Breast epithelium (tissue), 4 donors: ENCODE measurements at regions of chr9 and their contacts with region 1.

Region 1: DNA sequence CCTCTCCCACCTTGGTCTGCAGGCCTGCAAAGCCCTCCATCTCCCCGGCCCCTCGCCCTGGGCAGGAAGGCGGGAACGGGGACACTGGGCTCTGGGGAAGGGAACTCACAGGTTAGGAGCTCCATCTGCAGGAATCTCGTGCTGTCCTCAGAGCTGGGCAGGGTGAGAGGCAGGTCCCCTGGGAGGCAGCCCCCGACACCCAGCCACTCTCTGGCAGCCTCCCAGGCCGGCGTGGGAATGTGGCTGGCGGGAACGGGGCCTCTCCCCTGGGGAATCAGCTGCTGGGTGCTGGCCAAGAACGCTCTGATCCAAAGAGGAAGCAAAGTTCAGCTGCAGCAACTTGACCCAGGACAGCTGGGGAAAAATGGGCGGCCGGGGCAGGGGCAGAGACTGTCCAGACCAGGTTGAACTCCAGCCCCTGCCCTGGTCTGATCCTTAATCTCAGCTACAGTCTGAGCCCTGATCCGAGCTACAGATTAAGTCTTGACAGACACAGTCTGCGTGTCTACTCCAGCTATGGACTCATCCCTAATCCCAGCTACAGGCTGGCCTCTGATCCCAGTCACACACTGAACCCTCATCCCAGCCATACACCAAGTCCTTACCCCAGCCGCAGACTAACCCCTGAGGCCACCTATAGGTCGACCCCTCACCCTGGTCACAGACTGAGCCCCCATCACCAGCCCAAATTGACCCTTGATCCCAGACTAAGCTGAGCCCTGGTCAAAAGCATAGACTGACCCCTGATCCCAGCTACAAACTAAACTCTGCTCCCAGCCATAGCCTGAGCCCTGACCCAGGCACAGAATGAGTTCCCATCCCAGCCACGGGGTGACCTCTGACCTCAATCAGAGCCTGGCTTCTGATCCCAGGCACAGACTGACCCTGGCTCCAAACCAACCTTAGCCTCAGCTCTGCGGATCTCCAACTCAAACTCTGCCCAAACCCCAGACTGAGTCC is 37.3 kb upstream of the EGFL7 start:
- DNase-seq: peak in 1 of 2 donors; percentile 46
- H3K4me3 ChIP-seq: peak overlapping the region in 1 of 3 donors; percentile 17
- H3K27ac ChIP-seq: peak overlapping the region in 1 of 2 donors; percentile 16
- H3K4me1 ChIP-seq: peaks cover 0 to 7% of the 10 kb centered on the region in 2 donors
- H3K27me3 ChIP-seq: no peaks in the 10 kb centered on the region
- CTCF ChIP-seq: no peak
- POLR2A ChIP-seq: no peak

Region 2: GRCh38 chr9:136609838-136610311 is 15.5 kb before region 1 on chr9:
- intact Hi-C with region 1: loop called (anchors 1 kb)
- DNase-seq: no peak
- H3K4me3 ChIP-seq: no peak overlapping the region
- H3K27ac ChIP-seq: no peak overlapping the region
- H3K4me1 ChIP-seq: no peaks in the 10 kb centered on the region
- H3K27me3 ChIP-seq: peaks cover 0 to 5% of the 10 kb centered on the region in 2 donors
- CTCF ChIP-seq: no peak
- POLR2A ChIP-seq: no peak

Region 3: DNA sequence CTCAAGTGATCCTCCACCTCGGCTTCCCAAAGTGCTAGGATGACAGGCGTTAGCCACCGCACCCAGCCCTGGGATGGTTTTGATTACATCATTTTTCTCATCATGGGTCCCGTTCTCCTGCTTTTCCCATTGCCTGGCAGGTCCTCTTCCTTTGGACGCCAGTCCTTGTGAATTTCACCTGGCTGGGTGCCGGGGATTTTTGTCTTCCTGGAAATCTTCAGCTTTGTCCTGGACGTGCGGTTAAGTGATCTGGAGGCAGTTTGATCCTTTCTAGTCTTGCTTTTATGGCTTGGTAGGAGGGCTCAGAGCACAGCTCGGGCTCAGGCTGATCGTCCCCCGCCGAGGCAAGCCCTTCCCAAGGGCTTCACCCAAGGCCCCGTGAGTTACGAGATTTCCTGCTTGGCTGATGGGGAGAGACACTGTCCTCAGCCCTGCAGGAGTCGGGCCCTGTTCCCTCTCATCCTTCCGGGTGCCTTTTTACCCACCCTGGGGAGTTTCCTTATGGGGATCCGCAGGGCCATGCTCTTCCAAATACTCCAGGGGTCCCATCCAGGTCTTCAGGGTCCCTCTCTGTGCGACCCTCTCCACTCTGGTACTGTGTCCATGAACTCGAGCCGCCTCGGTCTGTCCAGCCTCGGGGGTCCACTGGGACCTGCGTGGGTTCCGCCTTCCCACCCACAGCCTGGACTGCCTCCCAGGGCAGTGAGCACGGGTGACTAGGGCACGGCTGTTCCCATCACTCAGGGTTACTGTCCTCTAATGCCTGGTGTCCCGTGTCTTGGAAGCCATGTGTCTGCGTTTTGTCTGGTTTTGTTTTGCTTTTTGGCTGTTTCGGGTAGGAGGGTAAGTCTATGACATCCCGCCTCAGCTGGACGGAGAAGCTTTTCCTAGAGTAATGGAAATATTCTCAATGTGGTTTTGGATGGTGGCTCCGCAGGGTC is 15.1 kb after region 1 on chr9:
- intact Hi-C with region 1: loop called (anchors 1 kb)
- DNase-seq: no peak
- H3K4me3 ChIP-seq: peak overlapping the region in 1 of 3 donors; percentile 30
- H3K27ac ChIP-seq: peak overlapping the region in 1 of 2 donors; percentile 76
- H3K4me1 ChIP-seq: no peaks in the 10 kb centered on the region
- H3K27me3 ChIP-seq: peaks cover 0 to 18% of the 10 kb centered on the region in 2 donors
- CTCF ChIP-seq: no peak
- POLR2A ChIP-seq: no peak